Caco-2 (cell line): ENCODE measurements at regions of chr13 and their contacts with region 1.

Region 1: DNA sequence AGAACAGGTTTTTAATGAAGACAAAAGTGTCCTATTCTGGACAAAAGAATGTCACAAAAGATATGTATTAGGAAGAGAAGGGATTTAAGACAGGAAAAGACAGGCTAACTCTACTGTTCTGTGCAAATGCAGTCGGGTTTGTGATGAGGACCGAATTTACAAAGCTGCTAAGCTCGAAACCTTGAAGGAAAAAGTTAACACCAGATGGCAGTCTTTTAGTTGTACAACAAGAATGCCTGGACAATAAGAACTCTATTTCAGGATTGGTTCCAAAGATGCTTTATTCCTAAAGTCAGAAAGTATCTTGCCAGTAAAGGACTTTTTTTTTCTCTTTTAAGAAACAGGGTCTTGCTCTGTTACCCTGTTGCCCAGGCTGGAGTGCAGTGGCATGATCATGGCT is 51.1 kb downstream of the HS6ST3 start:
- DNase-seq: peak in 1 of 2 experiments; percentile 28
- H3K4me3 ChIP-seq: no peak overlapping the region
- H3K4me3 Mint-ChIP-seq: no peak overlapping the region
- H3K27ac Mint-ChIP-seq: no peak overlapping the region
- H3K4me1 ChIP-seq: no peaks in the 10 kb centered on the region
- H3K4me1 Mint-ChIP-seq: no peaks in the 10 kb centered on the region
- H3K27me3 ChIP-seq: no peaks in the 10 kb centered on the region
- H3K27me3 Mint-ChIP-seq: peaks cover 6% of the 10 kb centered on the region
- CTCF ChIP-seq: peak in 1 of 2 experiments; percentile 46

Region 2: GRCh38 chr13:96119921-96120320 is 21.1 kb before region 1 on chr13:
- CTCF ChIA-PET with region 1: no interaction called
- POLR2A ChIA-PET with region 1: no interaction called
- intact Hi-C with region 1: no loop called
- DNase-seq: no peak
- H3K4me3 ChIP-seq: no peak overlapping the region
- H3K4me3 Mint-ChIP-seq: no peak overlapping the region
- H3K27ac Mint-ChIP-seq: no peak overlapping the region
- H3K4me1 ChIP-seq: no peaks in the 10 kb centered on the region
- H3K4me1 Mint-ChIP-seq: no peaks in the 10 kb centered on the region
- H3K27me3 ChIP-seq: no peaks in the 10 kb centered on the region; the same call in 1 of the 2 replicates
- H3K27me3 Mint-ChIP-seq: peaks cover 2% of the 10 kb centered on the region
- CTCF ChIP-seq: no peak

Region 3: GRCh38 chr13:96229356-96229755 is 88.3 kb after region 1 on chr13:
- CTCF ChIA-PET with region 1: interaction called, 6 read pairs
- POLR2A ChIA-PET with region 1: no interaction called
- intact Hi-C with region 1: loop called (anchors 1 kb)
- DNase-seq: peak in 1 of 2 experiments; percentile 44
- H3K4me3 ChIP-seq: no peak overlapping the region
- H3K4me3 Mint-ChIP-seq: no peak overlapping the region
- H3K27ac Mint-ChIP-seq: no peak overlapping the region
- H3K4me1 ChIP-seq: no peaks in the 10 kb centered on the region
- H3K4me1 Mint-ChIP-seq: no peaks in the 10 kb centered on the region
- H3K27me3 ChIP-seq: peaks cover 2% of the 10 kb centered on the region; the same call in 1 of the 2 replicates
- H3K27me3 Mint-ChIP-seq: no peaks in the 10 kb centered on the region
- CTCF ChIP-seq: peak; percentile 45 to 70

Region 4: GRCh38 chr13:96575423-96576320 is 434.6 kb after region 1 on chr13:
- CTCF ChIA-PET with region 1: no interaction called
- POLR2A ChIA-PET with region 1: no interaction called
- intact Hi-C with region 1: no loop called
- DNase-seq: no peak
- H3K4me3 ChIP-seq: no peak overlapping the region
- H3K4me3 Mint-ChIP-seq: no peak overlapping the region
- H3K27ac Mint-ChIP-seq: no peak overlapping the region
- H3K4me1 ChIP-seq: no peaks in the 10 kb centered on the region
- H3K4me1 Mint-ChIP-seq: no peaks in the 10 kb centered on the region
- H3K27me3 ChIP-seq: no peaks in the 10 kb centered on the region
- H3K27me3 Mint-ChIP-seq: peaks cover 4% of the 10 kb centered on the region
- CTCF ChIP-seq: no peak

Region 5: GRCh38 chr13:96817336-96817941 is 676.4 kb after region 1 on chr13:
- CTCF ChIA-PET with region 1: interaction called, 13 read pairs
- POLR2A ChIA-PET with region 1: no interaction called
- intact Hi-C with region 1: loop called (anchors 1 kb)
- DNase-seq: peak in 1 of 2 experiments; percentile 28
- H3K4me3 ChIP-seq: no peak overlapping the region
- H3K4me3 Mint-ChIP-seq: no peak overlapping the region
- H3K27ac Mint-ChIP-seq: no peak overlapping the region
- H3K4me1 ChIP-seq: no peaks in the 10 kb centered on the region
- H3K4me1 Mint-ChIP-seq: no peaks in the 10 kb centered on the region
- H3K27me3 ChIP-seq: no peaks in the 10 kb centered on the region
- H3K27me3 Mint-ChIP-seq: peaks cover under 1% of the 10 kb centered on the region
- CTCF ChIP-seq: peak; percentile 56 to 64

Region 6: GRCh38 chr13:96963786-96964475 is 822.9 kb after region 1 on chr13:
- CTCF ChIA-PET with region 1: interaction called, 4 read pairs
- POLR2A ChIA-PET with region 1: no interaction called
- intact Hi-C with region 1: loop called (anchors 5 kb)
- DNase-seq: no peak
- H3K4me3 ChIP-seq: no peak overlapping the region
- H3K4me3 Mint-ChIP-seq: no peak overlapping the region
- H3K27ac Mint-ChIP-seq: no peak overlapping the region
- H3K4me1 ChIP-seq: no peaks in the 10 kb centered on the region
- H3K4me1 Mint-ChIP-seq: no peaks in the 10 kb centered on the region
- H3K27me3 ChIP-seq: no peaks in the 10 kb centered on the region
- H3K27me3 Mint-ChIP-seq: peaks cover 6% of the 10 kb centered on the region
- CTCF ChIP-seq: no peak